ENCODE measurements at regions of chr16 and their contacts with region 1.

Region 1: DNA sequence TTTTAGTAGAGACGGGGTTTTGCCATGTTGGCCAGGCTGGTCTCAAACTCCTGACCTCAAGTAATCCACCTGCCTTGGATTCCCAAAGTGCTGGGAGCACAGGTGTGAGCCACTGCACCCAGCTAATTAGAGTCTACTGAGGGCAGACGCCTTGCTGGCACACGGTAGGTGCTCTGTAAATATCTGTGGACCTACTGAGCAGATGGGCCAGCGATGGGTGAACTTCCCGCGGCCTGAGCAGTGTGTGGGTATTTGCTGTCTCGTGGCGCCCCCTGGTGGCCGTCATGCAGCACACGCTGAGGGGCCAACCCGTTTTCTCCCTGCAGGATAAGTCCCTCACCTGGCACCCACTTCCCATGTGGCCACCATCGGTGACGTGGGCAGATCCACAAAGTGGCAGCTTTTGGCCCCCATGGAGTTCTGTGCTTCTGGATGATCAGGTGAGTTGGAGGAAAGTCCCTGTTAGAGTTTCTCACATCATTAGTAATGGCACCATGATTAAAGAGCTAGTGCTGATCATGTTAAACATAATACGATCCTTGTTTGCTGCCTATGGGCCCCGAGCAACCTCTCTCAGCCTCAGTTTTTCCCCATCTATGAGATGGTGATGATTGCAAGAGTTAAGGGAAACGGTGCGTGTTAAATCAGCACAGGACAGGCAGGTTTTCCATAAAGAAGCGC is 40.7 kb downstream of the ZDHHC7 start:
- H3K4me3 ChIP-seq: no peak overlapping the region
- H3K27ac ChIP-seq: no peak overlapping the region
- H3K4me1 ChIP-seq: no peaks in the 10 kb centered on the region
- CTCF ChIP-seq: peak; percentile 94

Region 2: GRCh38 chr16:84738255-84739038 is 232.1 kb before region 1 on chr16:
- CTCF ChIA-PET with region 1: interaction called, 73 read pairs
- POLR2A ChIA-PET with region 1: no interaction called
- H3K4me3 ChIP-seq: no peak overlapping the region
- H3K27ac ChIP-seq: no peak overlapping the region
- H3K4me1 ChIP-seq: peaks cover 10% of the 10 kb centered on the region
- CTCF ChIP-seq: peak; percentile 73

Region 3: GRCh38 chr16:84746882-84747281 is 223.7 kb before region 1 on chr16:
- CTCF ChIA-PET with region 1: interaction called, 13 read pairs
- POLR2A ChIA-PET with region 1: no interaction called
- H3K4me3 ChIP-seq: no peak overlapping the region
- H3K27ac ChIP-seq: no peak overlapping the region
- H3K4me1 ChIP-seq: no peaks in the 10 kb centered on the region
- CTCF ChIP-seq: no peak

Region 4: GRCh38 chr16:84907575-84907974 is 63.0 kb before region 1 on chr16:
- CTCF ChIA-PET with region 1: no interaction called
- POLR2A ChIA-PET with region 1: no interaction called
- H3K4me3 ChIP-seq: no peak overlapping the region
- H3K27ac ChIP-seq: no peak overlapping the region
- H3K4me1 ChIP-seq: no peaks in the 10 kb centered on the region
- CTCF ChIP-seq: no peak

Region 5: DNA sequence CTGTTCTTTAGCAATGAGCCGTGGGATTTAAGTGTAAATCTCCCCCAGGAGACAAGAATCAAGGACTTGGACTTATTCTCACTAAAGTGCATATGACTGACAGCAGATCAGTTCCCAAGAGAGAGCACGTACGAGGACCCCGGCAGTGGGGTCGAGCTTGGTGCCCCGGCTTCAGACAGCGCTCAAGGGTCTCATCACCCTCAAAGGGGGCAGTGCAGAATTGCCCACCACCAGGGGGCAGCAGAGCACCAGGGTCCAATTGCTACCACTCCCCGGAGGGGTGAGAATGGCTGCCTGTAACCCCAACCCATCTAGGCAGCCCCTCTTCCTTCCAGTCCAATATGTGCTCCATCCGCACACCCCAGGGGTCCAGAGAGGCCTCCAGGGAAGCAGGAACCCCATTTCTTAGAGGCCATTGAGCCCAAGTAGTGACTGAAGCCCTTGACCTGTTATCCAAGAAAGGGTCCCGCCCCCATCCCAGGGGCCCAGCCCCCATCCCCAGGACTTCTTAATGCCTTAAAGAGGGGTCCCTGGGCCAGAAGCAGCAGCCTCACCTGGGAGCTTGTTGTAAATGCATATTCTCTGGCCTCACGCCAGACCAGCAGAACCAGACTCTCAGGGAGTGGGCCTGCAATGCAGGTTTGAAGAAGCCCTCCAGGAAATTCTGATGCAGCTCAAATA is 45.4 kb before region 1 on chr16:
- CTCF ChIA-PET with region 1: interaction called, 23 read pairs
- POLR2A ChIA-PET with region 1: no interaction called
- H3K4me3 ChIP-seq: no peak overlapping the region
- H3K27ac ChIP-seq: no peak overlapping the region
- H3K4me1 ChIP-seq: no peaks in the 10 kb centered on the region; the same call in 1 of the 2 replicates
- CTCF ChIP-seq: peak; percentile 73

Region 6: GRCh38 chr16:84952335-84953189 is 18.0 kb before region 1 on chr16:
- CTCF ChIA-PET with region 1: interaction called, 78 read pairs
- POLR2A ChIA-PET with region 1: no interaction called
- H3K4me3 ChIP-seq: no peak overlapping the region
- H3K27ac ChIP-seq: no peak overlapping the region
- H3K4me1 ChIP-seq: no peaks in the 10 kb centered on the region
- CTCF ChIP-seq: peak; percentile 75

Region 7: GRCh38 chr16:85004559-85005205 is 34.1 kb after region 1 on chr16:
- CTCF ChIA-PET with region 1: interaction called, 11 read pairs
- POLR2A ChIA-PET with region 1: no interaction called
- H3K4me3 ChIP-seq: no peak overlapping the region
- H3K27ac ChIP-seq: no peak overlapping the region
- H3K4me1 ChIP-seq: peaks cover 12% of the 10 kb centered on the region; the same call in 1 of the 2 replicates
- CTCF ChIP-seq: no peak

Region 8: DNA sequence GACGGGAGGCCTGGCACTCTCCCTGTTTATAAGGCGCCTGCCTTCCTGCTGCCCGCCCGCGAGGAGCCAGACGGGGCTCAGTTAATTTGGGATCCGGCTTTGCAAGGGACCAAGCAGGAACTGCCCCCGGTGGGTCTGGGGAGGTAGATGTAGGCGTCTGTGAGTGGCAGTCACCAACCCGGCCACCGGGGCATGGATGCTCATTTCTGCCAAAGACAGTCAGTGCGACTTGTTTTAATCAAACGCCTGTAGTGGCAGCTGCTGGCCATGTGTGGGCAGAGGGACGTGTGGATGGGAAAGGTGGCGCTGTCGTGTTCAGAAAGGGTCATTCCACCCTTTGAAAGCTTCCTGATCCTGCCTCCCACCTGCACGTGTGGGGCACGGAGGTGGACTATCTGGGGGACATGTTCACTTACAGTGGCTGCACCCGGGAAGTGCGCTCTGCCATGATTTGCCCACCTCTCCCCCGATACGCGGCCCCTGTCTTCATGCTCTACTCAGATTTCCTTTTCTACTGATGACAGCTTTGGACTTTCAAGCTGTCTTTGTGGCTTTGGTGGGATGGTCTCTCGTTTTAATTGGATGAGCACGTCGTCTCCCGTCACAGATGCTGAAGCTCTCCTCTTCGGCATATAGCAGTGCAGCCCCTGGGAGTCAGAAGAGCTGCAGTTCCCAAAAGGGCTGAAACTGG is 202.0 kb after region 1 on chr16:
- CTCF ChIA-PET with region 1: no interaction called
- POLR2A ChIA-PET with region 1: no interaction called
- H3K4me3 ChIP-seq: no peak overlapping the region
- H3K27ac ChIP-seq: no peak overlapping the region
- H3K4me1 ChIP-seq: peaks cover 9% of the 10 kb centered on the region
- CTCF ChIP-seq: peak; percentile 98

Measured in HEK293 (cell line).